ENCODE measurements at regions of chr12 and their contacts with region 1.

Region 1: DNA sequence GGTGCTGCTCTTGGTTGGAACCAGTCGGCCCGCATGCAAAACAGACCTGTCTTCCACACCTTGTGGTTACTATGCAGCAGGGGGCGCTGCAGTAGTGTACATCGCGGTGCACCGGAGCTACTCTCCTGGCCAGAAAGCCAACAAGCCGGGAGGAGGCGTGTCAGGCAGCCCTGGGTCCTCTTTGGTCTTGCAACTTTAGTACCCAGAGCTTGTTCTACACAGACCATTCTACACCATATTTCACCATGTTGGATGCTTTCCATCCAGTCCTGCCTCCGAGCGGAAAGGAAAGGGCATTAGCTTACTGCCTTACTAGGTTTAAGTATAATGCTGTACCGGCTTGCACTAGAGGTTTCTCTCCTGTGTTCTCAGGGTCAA is 927 bp upstream of the TMTC2 start:
- DNase-seq: peak; percentile 96
- H3K4me3 Mint-ChIP-seq: peak overlapping the region; percentile 85
- H3K27ac Mint-ChIP-seq: no peak overlapping the region
- H3K4me1 Mint-ChIP-seq: peaks cover 16% of the 10 kb centered on the region
- H3K27me3 Mint-ChIP-seq: no peaks in the 10 kb centered on the region
- CTCF ChIP-seq: peak; percentile 77

Region 2: GRCh38 chr12:82527165-82527780 is 158.5 kb before region 1 on chr12:
- CTCF ChIA-PET with region 1: interaction called, 13 read pairs
- POLR2A ChIA-PET with region 1: no interaction called
- intact Hi-C with region 1: loop called (anchors 2 kb)
- DNase-seq: peak; percentile 79
- H3K4me3 Mint-ChIP-seq: no peak overlapping the region
- H3K27ac Mint-ChIP-seq: no peak overlapping the region
- H3K4me1 Mint-ChIP-seq: no peaks in the 10 kb centered on the region
- H3K27me3 Mint-ChIP-seq: peaks cover 11% of the 10 kb centered on the region
- CTCF ChIP-seq: peak; percentile 83

Region 3: GRCh38 chr12:82672811-82673495 is 12.8 kb before region 1 on chr12:
- CTCF ChIA-PET with region 1: interaction called, 55 read pairs
- POLR2A ChIA-PET with region 1: interaction called, 3 read pairs
- intact Hi-C with region 1: no loop called
- DNase-seq: no peak
- H3K4me3 Mint-ChIP-seq: no peak overlapping the region
- H3K27ac Mint-ChIP-seq: no peak overlapping the region
- H3K4me1 Mint-ChIP-seq: no peaks in the 10 kb centered on the region
- H3K27me3 Mint-ChIP-seq: no peaks in the 10 kb centered on the region
- CTCF ChIP-seq: no peak

Region 4: DNA sequence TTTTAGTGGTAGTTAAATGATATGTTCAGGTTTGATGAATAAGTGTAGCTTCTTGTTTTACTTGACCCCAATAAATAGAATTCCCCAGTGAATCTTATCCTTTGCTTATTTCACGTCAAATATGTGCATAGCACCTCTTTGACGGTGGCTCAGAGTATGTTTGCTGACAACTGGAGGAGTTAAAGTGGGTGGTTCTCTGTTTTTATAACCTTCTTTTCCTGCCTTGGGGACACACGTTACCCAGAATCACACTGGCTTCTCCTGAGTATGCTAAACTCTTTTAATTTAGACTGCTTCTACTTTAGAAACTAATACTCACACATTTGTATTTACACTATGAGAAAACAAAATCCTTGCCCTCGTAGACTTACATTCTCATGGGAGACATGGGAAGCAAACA is 63.2 kb after region 1 on chr12:
- CTCF ChIA-PET with region 1: no interaction called
- POLR2A ChIA-PET with region 1: no interaction called
- intact Hi-C with region 1: no loop called
- DNase-seq: no peak
- H3K4me3 Mint-ChIP-seq: no peak overlapping the region
- H3K27ac Mint-ChIP-seq: no peak overlapping the region
- H3K4me1 Mint-ChIP-seq: no peaks in the 10 kb centered on the region
- H3K27me3 Mint-ChIP-seq: no peaks in the 10 kb centered on the region
- CTCF ChIP-seq: no peak

Region 5: GRCh38 chr12:82896979-82897378 is 211.2 kb after region 1 on chr12:
- CTCF ChIA-PET with region 1: interaction called, 24 read pairs
- POLR2A ChIA-PET with region 1: interaction called, 3 read pairs
- intact Hi-C with region 1: loop called (anchors 10 kb)
- DNase-seq: peak; percentile 79
- H3K4me3 Mint-ChIP-seq: no peak overlapping the region
- H3K27ac Mint-ChIP-seq: no peak overlapping the region
- H3K4me1 Mint-ChIP-seq: no peaks in the 10 kb centered on the region
- H3K27me3 Mint-ChIP-seq: no peaks in the 10 kb centered on the region
- CTCF ChIP-seq: no peak

Region 6: DNA sequence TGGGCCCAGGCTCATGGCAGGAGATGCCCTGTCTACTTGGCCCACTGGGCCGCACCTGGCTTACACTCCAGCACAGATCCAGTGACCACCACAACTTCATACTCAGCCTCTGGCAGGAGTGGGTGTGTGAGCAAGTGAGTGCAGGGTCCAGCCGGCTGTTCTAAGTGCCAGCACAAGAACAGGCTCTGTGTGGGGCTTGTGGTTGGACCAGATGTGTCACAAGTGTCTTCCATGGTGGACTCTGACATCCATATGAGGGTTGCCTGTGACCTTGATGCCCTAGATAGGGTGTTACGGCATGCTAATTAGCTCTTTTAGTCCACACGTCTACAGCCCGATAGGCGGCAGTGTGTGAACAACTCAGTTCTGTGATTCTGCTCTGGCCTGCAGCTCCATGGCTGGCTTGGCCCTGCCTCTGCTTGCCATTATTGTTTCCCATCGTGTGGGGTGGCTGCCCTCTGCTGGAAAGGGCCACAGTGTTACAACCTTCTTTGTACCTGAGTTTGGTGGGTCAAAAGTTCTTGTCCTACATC is 1137.7 kb after region 1 on chr12:
- CTCF ChIA-PET with region 1: interaction called, 58 read pairs
- POLR2A ChIA-PET with region 1: interaction called, 3 read pairs
- intact Hi-C with region 1: loop called (anchors 1 kb)
- DNase-seq: peak; percentile 73
- H3K4me3 Mint-ChIP-seq: no peak overlapping the region
- H3K27ac Mint-ChIP-seq: no peak overlapping the region
- H3K4me1 Mint-ChIP-seq: peaks cover 7% of the 10 kb centered on the region
- H3K27me3 Mint-ChIP-seq: no peaks in the 10 kb centered on the region
- CTCF ChIP-seq: peak; percentile 49

Region 7: GRCh38 chr12:84619113-84619512 is 1933.3 kb after region 1 on chr12:
- CTCF ChIA-PET with region 1: interaction called, 14 read pairs
- POLR2A ChIA-PET with region 1: no interaction called
- intact Hi-C with region 1: no loop called
- DNase-seq: no peak
- H3K4me3 Mint-ChIP-seq: no peak overlapping the region
- H3K27ac Mint-ChIP-seq: no peak overlapping the region
- H3K4me1 Mint-ChIP-seq: no peaks in the 10 kb centered on the region
- H3K27me3 Mint-ChIP-seq: no peaks in the 10 kb centered on the region
- CTCF ChIP-seq: peak; percentile 31

Measured in MCF 10A (cell line).